ENCODE measurements at regions of chr11 and their contacts with region 1.

Region 1: DNA sequence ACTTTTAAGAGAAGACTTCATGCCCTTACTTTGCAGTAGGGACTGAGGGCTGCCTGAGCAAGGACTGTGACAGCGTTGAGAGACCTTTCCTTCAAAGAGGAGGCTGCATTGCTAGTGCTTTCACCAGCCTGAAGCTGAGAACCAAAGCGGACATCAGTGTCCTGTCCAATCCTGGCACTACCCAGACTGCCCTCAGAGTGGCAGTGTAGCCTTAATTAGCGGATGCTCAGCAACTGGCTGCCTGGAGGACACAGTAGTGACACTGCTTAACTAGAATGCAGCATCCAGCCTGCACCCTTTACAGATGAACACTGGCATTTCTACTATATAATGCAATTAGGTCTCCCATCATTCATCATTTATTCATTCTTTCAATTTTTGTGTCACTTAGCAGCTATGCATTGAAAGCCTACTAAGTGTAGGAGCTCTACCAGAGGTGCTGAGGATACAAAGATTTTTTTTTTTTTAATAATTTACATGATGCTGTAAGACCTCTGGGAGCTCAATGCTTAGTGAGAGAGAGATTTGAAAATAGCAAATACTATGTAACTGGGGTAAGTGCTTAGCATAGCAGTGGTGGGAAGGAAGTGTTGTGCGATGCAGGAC is 36.9 kb upstream of the SLC36A4 start:
- DNase-seq: peak; percentile 13
- H3K4me3 ChIP-seq: no peak overlapping the region
- H3K27me3 ChIP-seq: peaks cover 6% of the 10 kb centered on the region
- CTCF ChIP-seq: peak; percentile 94

Region 2: DNA sequence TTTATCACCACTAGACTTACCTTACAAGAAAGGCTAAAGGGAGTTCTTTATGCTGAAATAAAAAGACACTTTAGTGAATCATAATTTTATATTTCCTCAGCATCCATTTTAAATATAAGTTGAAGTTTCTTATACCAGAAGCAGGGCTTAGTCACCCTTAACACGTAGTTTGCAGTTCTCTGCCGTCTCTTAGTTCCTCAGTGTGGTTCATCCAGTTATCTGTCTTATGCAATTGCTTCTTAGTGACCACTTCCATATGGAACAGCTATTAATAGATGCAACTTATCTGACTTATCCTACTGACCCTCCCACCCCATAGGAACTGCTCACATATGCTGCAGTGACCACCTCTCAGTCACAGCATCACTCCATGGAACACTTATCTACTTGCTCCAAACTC is 25.2 kb before region 1 on chr11:
- CTCF ChIA-PET with region 1: no interaction called
- POLR2A ChIA-PET with region 1: no interaction called
- DNase-seq: no peak
- H3K4me3 ChIP-seq: no peak overlapping the region
- H3K27me3 ChIP-seq: no peaks in the 10 kb centered on the region; the same call in 1 of the 2 replicates
- CTCF ChIP-seq: no peak

Region 3: DNA sequence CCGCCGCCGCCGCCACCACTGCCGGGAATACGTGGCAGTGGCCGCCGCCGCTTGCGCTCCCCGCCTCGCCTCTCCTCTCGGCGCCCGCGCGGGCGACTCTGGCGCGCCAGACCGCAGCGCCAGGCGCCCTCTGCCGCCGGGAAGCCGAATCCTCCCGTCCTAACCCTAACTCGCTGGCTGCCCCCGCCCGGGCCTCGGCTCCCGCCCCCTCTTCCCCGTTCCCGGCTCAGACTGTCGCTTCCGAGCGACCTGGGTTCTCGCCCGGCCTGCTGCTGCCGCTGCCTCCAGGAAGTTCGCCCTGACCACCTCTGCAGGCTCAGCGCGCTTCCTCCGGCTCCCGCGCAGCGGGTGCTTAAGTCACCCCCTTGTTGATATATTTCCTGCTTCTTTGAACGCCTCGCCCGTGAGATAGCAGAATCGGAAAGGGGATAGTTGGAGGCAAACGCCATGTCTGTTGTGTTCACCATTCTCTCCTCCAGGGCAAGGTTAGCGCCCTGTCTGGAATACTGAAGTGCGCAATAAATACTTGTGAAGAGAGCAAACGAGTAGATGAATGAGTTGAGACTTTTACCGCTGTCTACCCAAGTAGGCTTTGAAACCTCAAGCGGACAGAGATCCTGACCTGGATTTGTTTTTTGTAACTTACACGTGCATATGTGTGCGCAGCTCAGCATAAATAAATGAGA is 308.7 kb after region 1 on chr11 and contains the start of gene SMCO4:
- CTCF ChIA-PET with region 1: interaction called, 21 read pairs
- POLR2A ChIA-PET with region 1: no interaction called
- DNase-seq: peak; percentile 14
- H3K4me3 ChIP-seq: peak within 1 kb of the TSS; percentile 77
- H3K27me3 ChIP-seq: peaks cover 3% of the 10 kb centered on the region
- CTCF ChIP-seq: peak; percentile 66
- polyA plus RNA-seq, gene SMCO4: 11.9 and 12.8 TPM in 2 replicates

Region 4: DNA sequence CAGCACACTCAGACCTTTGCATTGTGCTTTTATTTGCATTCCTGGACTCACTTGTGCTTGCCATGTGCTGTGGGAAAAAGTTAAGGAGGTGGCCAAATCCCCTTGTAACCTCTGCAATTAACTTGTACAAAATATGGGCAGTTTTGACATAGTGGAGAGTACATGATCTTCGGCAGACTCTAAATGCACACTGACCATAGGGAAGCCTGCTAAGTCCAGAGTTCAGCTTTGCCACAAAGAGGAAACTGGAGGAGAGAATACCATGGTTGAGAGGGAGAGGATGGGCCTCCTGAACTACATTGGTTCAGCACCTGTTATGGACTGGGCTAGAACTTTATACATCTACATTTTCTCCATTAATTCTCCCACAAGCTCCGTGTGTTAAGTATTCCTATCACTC is 389.2 kb after region 1 on chr11:
- CTCF ChIA-PET with region 1: interaction called, 11 read pairs
- POLR2A ChIA-PET with region 1: no interaction called
- DNase-seq: no peak
- H3K4me3 ChIP-seq: no peak overlapping the region
- H3K27me3 ChIP-seq: peaks cover 2% of the 10 kb centered on the region
- CTCF ChIP-seq: no peak

Region 5: DNA sequence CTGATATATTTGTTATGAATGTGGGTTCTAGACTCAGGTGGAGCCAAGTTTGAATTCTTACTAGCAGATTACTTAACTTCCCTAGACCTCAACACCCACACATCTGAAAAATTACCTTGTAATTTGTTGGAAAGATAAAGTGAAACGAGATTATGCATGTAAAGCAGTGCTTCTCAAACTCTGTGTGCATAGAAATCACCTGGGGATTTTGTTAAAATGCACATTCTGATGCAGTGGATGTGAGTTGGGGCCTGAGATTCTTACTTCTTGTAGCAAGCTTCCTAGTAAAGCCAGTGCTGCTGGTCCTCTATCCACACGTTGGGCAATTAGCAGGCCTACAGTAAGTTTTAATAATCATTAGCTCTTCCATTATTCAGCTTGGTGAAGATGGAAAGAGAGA is 411.7 kb after region 1 on chr11:
- CTCF ChIA-PET with region 1: interaction called, 119 read pairs
- POLR2A ChIA-PET with region 1: no interaction called
- DNase-seq: no peak
- H3K4me3 ChIP-seq: no peak overlapping the region
- H3K27me3 ChIP-seq: peaks cover 5% of the 10 kb centered on the region
- CTCF ChIP-seq: no peak

Region 6: GRCh38 chr11:93652161-93652597 is 417.5 kb after region 1 on chr11:
- CTCF ChIA-PET with region 1: interaction called, 119 read pairs
- POLR2A ChIA-PET with region 1: no interaction called
- DNase-seq: no peak
- H3K4me3 ChIP-seq: no peak overlapping the region
- H3K27me3 ChIP-seq: peaks cover 4% of the 10 kb centered on the region; the same call in 1 of the 2 replicates
- CTCF ChIP-seq: peak; percentile 67